ENCODE measurements at regions of chr6 and their contacts with region 1.

Region 1: GRCh38 chr6:152232501-152233151 is 404.5 kb downstream of the SYNE1 start:
- DNase-seq: no peak
- H3K4me3 Mint-ChIP-seq: peak overlapping the region; percentile 74
- H3K27ac Mint-ChIP-seq: peak overlapping the region; percentile 55
- H3K4me1 Mint-ChIP-seq: peaks cover 28% of the 10 kb centered on the region
- H3K27me3 Mint-ChIP-seq: no peaks in the 10 kb centered on the region

Region 2: GRCh38 chr6:152160346-152160745 is 72.3 kb before region 1 on chr6:
- intact Hi-C with region 1: loop called (anchors 2 kb)
- DNase-seq: no peak
- H3K4me3 Mint-ChIP-seq: no peak overlapping the region
- H3K27ac Mint-ChIP-seq: peak overlapping the region; percentile 82
- H3K4me1 Mint-ChIP-seq: peaks cover 22% of the 10 kb centered on the region
- H3K27me3 Mint-ChIP-seq: no peaks in the 10 kb centered on the region

Region 3: DNA sequence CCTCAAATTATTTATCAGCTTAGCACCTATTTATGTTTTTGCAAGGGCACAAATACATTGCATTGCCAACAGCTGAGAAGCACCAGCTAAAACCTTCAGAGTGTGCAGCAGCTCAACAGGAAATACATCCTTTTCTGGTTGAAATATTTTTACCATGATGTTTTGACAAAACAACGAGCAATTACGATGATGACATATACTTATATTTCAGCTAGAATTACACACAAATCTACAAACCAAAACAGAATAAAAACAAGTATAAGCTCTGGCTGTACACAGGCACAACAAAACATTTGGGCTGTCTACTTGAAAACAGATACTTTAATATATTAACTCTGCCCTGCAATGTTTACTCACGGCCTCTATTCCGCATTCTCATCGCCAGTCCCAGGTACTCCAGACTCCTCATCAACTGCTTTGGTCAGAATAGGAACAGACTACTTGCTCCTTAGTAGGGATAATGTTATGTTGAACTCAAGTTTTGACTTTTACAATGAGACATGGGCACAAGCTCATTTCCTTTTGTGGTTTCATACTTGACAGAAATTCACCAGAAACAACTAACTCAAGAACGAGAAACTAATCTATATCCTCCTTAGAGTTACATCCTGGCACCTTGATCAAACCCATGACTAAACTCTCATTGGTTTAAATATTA is 47.6 kb before region 1 on chr6:
- intact Hi-C with region 1: loop called (anchors 2 kb)
- DNase-seq: peak; percentile 10
- H3K4me3 Mint-ChIP-seq: peak overlapping the region; percentile 88
- H3K27ac Mint-ChIP-seq: peak overlapping the region; percentile 97
- H3K4me1 Mint-ChIP-seq: peaks cover 66% of the 10 kb centered on the region
- H3K27me3 Mint-ChIP-seq: no peaks in the 10 kb centered on the region

Region 4: DNA sequence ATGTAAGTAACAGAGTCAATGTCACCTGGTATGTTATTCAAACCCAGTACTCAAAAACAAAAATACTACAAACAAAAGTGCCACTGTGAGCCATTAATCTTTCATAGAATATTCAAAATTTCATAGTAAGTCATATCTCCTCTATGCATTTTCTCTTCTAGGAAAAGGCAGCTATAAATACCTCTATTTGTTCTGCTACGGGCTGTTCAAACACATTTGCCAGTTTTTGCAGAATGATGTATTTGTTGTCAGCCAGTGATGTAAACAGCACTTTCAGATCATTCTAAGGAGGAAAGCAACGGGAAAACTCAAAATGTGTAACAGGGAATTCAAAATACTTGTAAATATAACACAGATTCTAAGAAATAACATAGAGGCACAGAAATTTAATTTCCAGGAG is 16.4 kb after region 1 on chr6:
- intact Hi-C with region 1: loop called (anchors 1 kb)
- DNase-seq: no peak
- H3K4me3 Mint-ChIP-seq: no peak overlapping the region
- H3K27ac Mint-ChIP-seq: no peak overlapping the region
- H3K4me1 Mint-ChIP-seq: no peaks in the 10 kb centered on the region
- H3K27me3 Mint-ChIP-seq: no peaks in the 10 kb centered on the region

Region 5: GRCh38 chr6:152301764-152302568 is 69.3 kb after region 1 on chr6:
- intact Hi-C with region 1: loop called (anchors 1 kb)
- DNase-seq: peak; percentile 88
- H3K4me3 Mint-ChIP-seq: peak overlapping the region; percentile 98
- H3K27ac Mint-ChIP-seq: peak overlapping the region; percentile 99
- H3K4me1 Mint-ChIP-seq: peaks cover 41% of the 10 kb centered on the region
- H3K27me3 Mint-ChIP-seq: peaks cover 4% of the 10 kb centered on the region